Calu3 (cell line): ENCODE measurements at regions of chr15 and their contacts with region 1.

Region 1: GRCh38 chr15:91867581-91868026 is 14.1 kb downstream of the SLCO3A1 start:
- DNase-seq: peak; percentile 94
- H3K4me3 Mint-ChIP-seq: peak overlapping the region; percentile 46
- H3K27ac Mint-ChIP-seq: peak overlapping the region; percentile 79
- H3K4me1 Mint-ChIP-seq: peaks cover 77% of the 10 kb centered on the region
- H3K27me3 Mint-ChIP-seq: no peaks in the 10 kb centered on the region
- CTCF ChIP-seq: no peak

Region 2: DNA sequence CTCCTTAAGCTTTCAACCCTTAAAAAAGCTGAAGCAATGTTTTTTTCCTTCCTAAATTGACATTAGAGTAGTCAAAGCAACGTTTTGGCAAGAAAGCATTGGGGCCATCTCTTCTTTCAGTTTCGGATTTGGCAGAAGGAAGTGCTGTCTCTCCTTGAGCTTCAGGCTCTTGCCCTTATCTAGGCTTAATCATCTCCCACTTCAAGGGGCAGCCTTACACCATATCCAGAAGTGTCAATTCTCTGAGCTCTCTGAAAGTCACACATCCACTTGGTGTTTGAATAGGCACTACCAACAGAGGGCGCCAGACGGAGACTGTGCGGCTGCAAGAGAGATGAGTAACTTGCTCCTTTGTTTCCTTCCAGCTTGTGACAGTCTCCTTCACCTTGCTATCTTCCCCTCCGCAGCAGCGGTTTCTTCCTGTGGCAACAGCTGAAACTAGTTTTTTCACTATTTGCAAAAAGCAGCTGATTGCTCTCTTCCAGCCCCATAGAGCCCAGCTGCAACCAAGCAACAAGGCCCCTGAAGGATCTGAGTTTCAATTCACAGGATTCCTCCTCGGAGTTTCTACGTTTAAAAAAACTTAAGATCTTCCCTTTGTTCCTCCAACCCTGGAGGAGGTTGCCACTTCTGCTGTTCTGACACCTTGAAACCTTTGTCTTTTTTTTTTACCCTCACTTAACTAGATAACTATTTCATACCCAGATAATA is 161.1 kb before region 1 on chr15:
- CTCF ChIA-PET with region 1: no interaction called
- intact Hi-C with region 1: no loop called
- DNase-seq: peak; percentile 85
- H3K4me3 Mint-ChIP-seq: no peak overlapping the region
- H3K27ac Mint-ChIP-seq: no peak overlapping the region
- H3K4me1 Mint-ChIP-seq: no peaks in the 10 kb centered on the region
- H3K27me3 Mint-ChIP-seq: no peaks in the 10 kb centered on the region
- CTCF ChIP-seq: peak; percentile 87

Region 3: GRCh38 chr15:91824256-91824655 is 43.3 kb before region 1 on chr15:
- CTCF ChIA-PET with region 1: no interaction called
- intact Hi-C with region 1: no loop called
- DNase-seq: no peak
- H3K4me3 Mint-ChIP-seq: no peak overlapping the region
- H3K27ac Mint-ChIP-seq: no peak overlapping the region
- H3K4me1 Mint-ChIP-seq: no peaks in the 10 kb centered on the region
- H3K27me3 Mint-ChIP-seq: peaks cover 11% of the 10 kb centered on the region
- CTCF ChIP-seq: no peak

Region 4: GRCh38 chr15:91852741-91853510 is 14.7 kb before region 1 on chr15:
- CTCF ChIA-PET with region 1: interaction called, 55 read pairs
- intact Hi-C with region 1: loop called (anchors 1 kb)
- DNase-seq: peak; percentile 87
- H3K4me3 Mint-ChIP-seq: peak overlapping the region; percentile 84
- H3K27ac Mint-ChIP-seq: peak overlapping the region; percentile 78
- H3K4me1 Mint-ChIP-seq: peaks cover 45% of the 10 kb centered on the region
- H3K27me3 Mint-ChIP-seq: no peaks in the 10 kb centered on the region
- CTCF ChIP-seq: peak; percentile 95

Region 5: GRCh38 chr15:91890614-91891013 is 23.0 kb after region 1 on chr15:
- CTCF ChIA-PET with region 1: interaction called, 4 read pairs
- intact Hi-C with region 1: loop called (anchors 2 kb)
- DNase-seq: peak; percentile 78
- H3K4me3 Mint-ChIP-seq: no peak overlapping the region
- H3K27ac Mint-ChIP-seq: peak overlapping the region; percentile 67
- H3K4me1 Mint-ChIP-seq: peaks cover 60% of the 10 kb centered on the region
- H3K27me3 Mint-ChIP-seq: no peaks in the 10 kb centered on the region
- CTCF ChIP-seq: no peak

Region 6: DNA sequence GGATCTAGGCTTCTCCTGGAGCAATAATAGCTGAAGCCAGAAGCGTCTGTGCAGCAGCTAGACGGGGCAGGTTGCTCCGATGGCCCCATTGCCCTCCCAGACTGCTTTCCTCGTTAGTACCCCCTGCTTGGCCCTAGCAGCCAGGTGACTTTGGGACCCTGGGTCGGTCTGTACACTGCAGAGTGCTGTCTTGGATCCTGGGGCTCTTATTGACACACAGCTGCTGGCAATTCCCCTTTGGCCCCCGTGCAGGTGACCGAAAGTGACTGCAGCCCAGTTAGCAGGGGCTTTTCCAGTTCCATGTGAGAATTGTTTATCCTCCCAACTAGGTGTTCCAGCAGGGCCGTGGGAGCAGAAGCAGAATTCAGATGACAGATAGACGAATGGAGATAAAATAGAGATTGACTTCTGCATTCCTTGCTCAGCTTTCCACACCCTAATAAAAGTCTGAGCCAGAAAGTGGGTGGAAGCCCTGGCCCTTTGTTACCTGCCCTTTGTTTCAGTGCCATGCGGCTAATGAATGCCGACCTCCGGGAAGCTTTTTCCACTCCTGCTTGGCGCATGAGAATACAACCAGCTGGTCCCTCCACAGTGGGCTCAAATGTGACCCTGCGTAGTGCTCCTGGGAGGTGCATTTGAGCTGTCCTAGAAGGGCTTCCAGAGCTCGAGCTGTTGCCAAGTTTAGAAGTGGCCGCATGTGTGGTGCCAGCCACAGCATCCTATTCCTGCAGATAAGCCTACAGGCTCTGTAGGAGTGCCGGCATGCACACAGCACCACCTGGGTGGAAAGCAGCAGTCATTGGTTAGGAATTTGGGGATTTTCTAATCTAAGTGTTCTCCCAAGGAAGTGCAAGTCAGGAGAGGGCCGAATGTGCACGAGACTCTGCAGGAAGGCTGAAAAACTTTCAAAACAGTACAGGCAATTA is 80.3 kb after region 1 on chr15:
- CTCF ChIA-PET with region 1: interaction called, 28 read pairs
- intact Hi-C with region 1: loop called (anchors 2 kb)
- DNase-seq: peak; percentile 68
- H3K4me3 Mint-ChIP-seq: peak overlapping the region; percentile 49
- H3K27ac Mint-ChIP-seq: peak overlapping the region; percentile 90
- H3K4me1 Mint-ChIP-seq: peaks cover 100% of the 10 kb centered on the region
- H3K27me3 Mint-ChIP-seq: no peaks in the 10 kb centered on the region
- CTCF ChIP-seq: no peak

Region 7: DNA sequence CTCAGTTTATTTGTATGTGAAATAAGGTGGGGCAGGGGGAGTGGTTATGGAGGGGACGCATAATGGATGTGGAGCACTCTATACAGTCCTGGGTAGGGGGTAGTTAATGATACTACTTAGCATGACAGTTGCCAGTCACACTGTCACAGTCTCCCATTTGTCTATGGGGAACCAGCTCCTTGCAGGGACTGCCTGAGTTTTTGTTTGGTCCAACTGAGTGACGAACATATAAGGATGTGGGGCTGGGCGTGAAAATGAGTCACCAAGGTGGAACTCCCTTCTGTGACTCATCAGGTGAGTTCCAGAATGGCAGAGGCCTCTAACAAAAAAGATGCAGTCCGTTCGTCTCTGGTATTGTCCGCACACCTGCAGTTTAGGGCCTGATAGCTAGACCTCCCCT is 290.8 kb after region 1 on chr15:
- CTCF ChIA-PET with region 1: no interaction called
- intact Hi-C with region 1: loop called (anchors 5 kb)
- DNase-seq: peak; percentile 81
- H3K4me3 Mint-ChIP-seq: no peak overlapping the region
- H3K27ac Mint-ChIP-seq: peak overlapping the region; percentile 74
- H3K4me1 Mint-ChIP-seq: peaks cover 32% of the 10 kb centered on the region
- H3K27me3 Mint-ChIP-seq: no peaks in the 10 kb centered on the region
- CTCF ChIP-seq: no peak